Activated CD4-positive, alpha-beta T cell treated with anti-CD3 and anti-CD28 coated beads, Interleukin-2, amount 10 ng/mL, durations not matched to agents 7 days and 5 days (primary cell): ENCODE measurements at regions of chr17 and their contacts with region 1.

Region 1: GRCh38 chr17:43760254-43760852 is 1.8 kb upstream of the SOST start:
- DNase-seq: peak; percentile 94
- H3K4me3 Mint-ChIP-seq: no peak overlapping the region
- H3K27ac Mint-ChIP-seq: no peak overlapping the region
- H3K4me1 Mint-ChIP-seq: peaks cover 3% of the 10 kb centered on the region
- H3K27me3 Mint-ChIP-seq: peaks cover 23% of the 10 kb centered on the region

Region 2: DNA sequence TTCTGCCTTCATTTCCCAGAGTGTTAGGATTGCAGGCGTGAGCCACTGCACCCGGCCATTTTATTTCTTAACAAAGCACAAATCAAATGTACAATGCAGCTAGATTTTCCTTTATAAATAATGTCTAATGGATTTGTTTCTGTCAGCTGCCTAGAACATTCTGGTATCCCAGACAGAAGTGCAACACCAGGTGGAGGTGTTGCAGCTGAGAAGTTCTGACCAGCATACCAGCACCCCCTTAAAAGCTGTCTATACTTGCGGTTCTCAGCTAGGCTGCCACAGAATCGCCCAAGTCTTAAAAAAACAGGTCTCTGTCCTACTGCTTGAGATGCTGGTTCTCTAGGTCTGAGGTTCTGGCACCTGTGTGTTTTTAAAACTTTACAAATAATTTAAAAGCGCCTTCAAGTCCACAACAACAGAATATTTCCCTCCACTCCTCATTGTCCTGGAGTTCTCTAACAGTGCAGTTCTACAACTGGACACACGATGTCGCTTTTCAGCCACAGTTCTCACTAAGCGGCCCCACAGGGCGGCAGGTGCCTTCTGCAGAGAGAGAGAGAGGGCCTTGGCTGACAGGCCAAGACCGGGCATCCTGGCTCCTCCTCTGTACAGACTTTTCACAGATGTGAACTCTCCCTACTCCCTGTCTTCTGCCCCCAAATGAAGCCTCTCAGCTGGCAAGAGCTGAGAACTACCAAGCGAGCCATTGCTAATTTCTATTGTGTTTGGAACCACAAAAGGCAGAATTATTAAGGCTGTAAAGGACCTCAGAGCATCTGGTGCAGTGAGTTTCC is 66.1 kb before region 1 on chr17:
- CTCF ChIA-PET with region 1: interaction called, 135 read pairs
- POLR2A ChIA-PET with region 1: interaction called, 4 read pairs
- DNase-seq: peak; percentile 82
- H3K4me3 Mint-ChIP-seq: no peak overlapping the region
- H3K27ac Mint-ChIP-seq: no peak overlapping the region
- H3K4me1 Mint-ChIP-seq: no peaks in the 10 kb centered on the region
- H3K27me3 Mint-ChIP-seq: peaks cover 7% of the 10 kb centered on the region

Region 3: DNA sequence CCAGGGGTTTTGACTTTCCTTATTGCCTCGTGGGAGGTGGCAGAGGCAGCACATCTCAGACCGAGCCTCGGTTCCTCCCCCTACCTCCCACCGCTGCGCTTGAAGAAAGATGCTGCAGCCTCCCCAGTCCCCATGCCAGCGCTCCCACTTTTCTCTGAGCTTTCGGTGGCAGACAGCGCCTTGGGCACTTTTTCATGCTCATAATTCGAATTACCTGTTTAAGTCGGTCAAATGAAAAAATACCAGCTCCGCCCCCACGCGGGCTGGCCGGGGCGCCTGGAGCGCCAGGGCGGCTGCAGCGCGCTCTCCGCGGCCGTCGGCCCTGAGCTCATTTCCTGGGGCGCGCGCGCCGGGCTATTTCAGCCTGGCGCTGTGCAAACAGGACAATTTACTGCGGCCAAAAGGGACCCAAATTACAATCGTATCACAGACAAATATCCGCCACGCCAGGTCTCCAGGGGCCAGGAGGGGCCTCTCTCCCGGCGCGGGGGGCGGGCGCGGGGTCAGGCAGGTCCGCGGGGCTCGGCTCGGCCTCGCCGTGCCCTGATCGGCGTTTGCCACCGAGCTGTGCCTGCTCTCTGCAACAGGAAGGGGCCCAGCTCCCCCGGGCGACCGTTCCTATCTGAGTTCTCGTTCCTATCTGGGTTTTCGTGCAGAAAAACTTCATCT is 46.7 kb before region 1 on chr17:
- CTCF ChIA-PET with region 1: interaction called, 13 read pairs
- POLR2A ChIA-PET with region 1: no interaction called
- DNase-seq: no peak
- H3K4me3 Mint-ChIP-seq: peak overlapping the region; percentile 44
- H3K27ac Mint-ChIP-seq: no peak overlapping the region
- H3K4me1 Mint-ChIP-seq: peaks cover 16% of the 10 kb centered on the region
- H3K27me3 Mint-ChIP-seq: peaks cover 51% of the 10 kb centered on the region

Region 4: DNA sequence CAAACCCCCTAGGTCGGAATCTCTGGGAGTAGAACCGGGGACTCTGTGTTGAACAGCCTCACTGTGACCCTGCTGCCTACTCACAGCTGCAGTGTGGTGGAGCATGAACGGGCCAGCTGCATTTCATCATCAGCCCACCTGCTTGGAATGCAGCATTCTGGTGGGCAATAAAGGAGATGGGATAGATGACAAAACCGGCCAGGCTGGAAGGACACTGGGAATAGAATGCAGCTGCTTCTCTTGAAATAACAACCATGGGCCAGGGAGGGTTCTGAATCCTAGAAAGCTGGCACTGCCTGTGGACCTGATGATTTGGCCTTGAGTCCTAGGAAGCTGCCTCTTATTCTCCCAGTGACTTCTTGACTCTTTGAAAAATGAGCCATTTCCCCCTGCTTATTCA is 43.4 kb after region 1 on chr17:
- CTCF ChIA-PET with region 1: no interaction called
- POLR2A ChIA-PET with region 1: no interaction called
- DNase-seq: no peak
- H3K4me3 Mint-ChIP-seq: no peak overlapping the region
- H3K27ac Mint-ChIP-seq: no peak overlapping the region
- H3K4me1 Mint-ChIP-seq: no peaks in the 10 kb centered on the region
- H3K27me3 Mint-ChIP-seq: peaks cover 31% of the 10 kb centered on the region